Activated CD4-positive, alpha-beta memory T cell treated with anti-CD3 and anti-CD28 coated beads for 36 hours (primary cell): ENCODE measurements at regions of chr15 and their contacts with region 1.

Region 1: DNA sequence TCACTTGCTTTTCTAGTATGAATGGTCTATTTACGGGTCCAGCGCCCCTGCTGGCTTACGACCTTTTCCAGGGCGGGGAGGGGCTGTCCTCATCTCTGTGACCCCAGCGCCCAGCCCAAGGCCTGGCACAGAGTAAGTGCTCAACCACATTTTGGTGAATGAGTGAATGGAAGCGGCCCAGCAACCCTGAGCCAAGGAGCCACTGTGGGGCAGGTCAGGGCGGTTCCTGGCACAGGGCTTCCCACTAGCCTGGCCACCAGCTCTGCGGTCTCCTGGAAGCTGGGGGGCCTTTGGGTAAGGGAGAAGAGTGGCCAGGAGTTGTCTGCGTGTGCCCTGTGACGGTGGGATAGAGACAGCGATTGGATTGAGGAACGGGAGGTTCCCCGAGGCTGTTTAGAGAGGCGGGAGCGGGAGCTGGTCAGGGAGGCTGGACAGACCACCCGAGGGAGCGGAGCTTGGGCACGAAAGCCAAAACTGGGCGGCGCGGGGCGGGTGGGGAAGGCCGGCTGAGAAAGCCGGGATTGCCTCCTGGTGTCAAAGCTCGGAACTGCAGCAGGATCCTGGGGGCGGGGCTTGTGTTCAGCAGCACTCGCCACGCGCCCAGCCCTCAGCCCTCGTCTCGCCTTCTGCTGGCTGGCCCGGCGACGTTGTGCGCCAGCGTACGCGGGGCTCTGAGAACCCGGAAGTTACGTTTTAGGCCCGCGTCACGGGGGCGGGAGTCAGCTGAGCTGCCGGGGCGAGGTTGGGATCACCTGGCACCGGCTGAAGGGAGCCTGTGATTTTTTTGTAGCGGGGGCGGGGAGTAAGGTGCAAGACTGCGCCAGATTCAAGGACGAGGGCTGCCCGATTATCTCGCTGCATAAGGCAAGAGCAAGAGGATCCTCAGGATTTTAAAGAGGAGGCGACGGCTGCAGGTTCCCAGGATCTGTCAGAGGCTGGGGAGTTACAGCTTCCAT is at the start of gene VPS18:
- DNase-seq: peak; percentile 99
- H3K4me3 Mint-ChIP-seq: peak within 1 kb of the TSS; percentile 99
- H3K27ac Mint-ChIP-seq: peak within 1 kb of the TSS; percentile 86
- H3K4me1 Mint-ChIP-seq: peaks cover 27% of the 10 kb centered on the region
- H3K27me3 Mint-ChIP-seq: no peaks in the 10 kb centered on the region
- total RNA-seq, gene VPS18: 7.8 to 8.8 TPM

Region 2: GRCh38 chr15:40593588-40594428 is 300.2 kb before region 1 on chr15 and contains the start of gene KNL1:
- CTCF ChIA-PET with region 1: interaction called, 7 read pairs
- POLR2A ChIA-PET with region 1: no interaction called
- intact Hi-C with region 1: loop called (anchors 5 kb)
- DNase-seq: peak; percentile 95
- H3K4me3 Mint-ChIP-seq: peak within 1 kb of the TSS; percentile 98
- H3K27ac Mint-ChIP-seq: peak within 1 kb of the TSS; percentile 99
- H3K4me1 Mint-ChIP-seq: peaks cover 26% of the 10 kb centered on the region
- H3K27me3 Mint-ChIP-seq: peaks cover 10% of the 10 kb centered on the region
- total RNA-seq, gene KNL1: 32.8 to 33.1 TPM

Region 3: DNA sequence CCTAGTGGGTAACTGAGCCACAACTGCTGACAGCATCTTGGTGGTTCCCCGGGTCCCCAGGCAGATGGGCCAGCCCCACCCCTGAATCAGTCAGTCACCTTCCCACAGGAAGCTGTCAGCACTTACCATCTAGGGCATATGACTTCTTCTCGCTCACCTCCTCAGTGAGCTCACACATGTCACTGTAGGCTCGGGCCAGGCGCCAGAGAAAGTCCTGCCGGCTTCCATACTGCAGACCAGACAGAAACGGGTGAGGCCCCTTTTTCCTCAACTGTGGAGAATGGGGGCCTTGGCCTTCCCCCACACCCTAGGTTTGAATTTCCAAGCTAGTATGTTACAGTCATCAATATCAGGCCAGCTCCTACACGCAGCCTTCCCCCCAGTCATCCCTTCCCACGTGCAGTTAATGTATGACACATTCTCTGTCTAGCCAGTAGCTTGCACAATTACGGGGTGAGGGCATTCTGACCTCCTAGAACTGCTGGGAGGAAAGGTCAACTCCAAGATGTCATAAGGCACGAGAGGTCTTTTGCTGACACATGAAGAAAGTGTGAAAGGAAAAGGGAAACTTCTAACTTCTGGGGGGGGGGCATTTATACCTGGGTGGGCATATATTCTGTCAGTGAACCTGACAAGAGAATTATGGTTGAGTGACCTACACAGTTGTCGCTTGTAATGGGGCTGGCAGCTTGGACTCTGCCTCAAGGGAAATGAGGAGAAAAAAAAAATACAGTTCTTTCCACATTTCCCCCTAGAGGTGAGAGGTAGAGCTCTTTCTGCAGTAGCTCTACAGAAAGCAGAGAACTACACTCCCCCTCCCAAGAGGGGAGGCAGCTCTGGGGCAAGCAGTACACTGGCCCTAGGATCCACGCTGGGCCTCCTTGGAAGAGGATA is 149.8 kb before region 1 on chr15:
- CTCF ChIA-PET with region 1: interaction called, 11 read pairs
- POLR2A ChIA-PET with region 1: no interaction called
- intact Hi-C with region 1: loop called (anchors 5 kb)
- DNase-seq: peak; percentile 86
- H3K4me3 Mint-ChIP-seq: peak overlapping the region; percentile 49
- H3K27ac Mint-ChIP-seq: peak overlapping the region; percentile 89
- H3K4me1 Mint-ChIP-seq: peaks cover 29% of the 10 kb centered on the region
- H3K27me3 Mint-ChIP-seq: no peaks in the 10 kb centered on the region

Region 4: GRCh38 chr15:40857601-40858341 is 36.2 kb before region 1 on chr15:
- CTCF ChIA-PET with region 1: interaction called, 267 read pairs
- POLR2A ChIA-PET with region 1: interaction called, 20 read pairs
- intact Hi-C with region 1: loop called (anchors 1 kb)
- DNase-seq: peak; percentile 88
- H3K4me3 Mint-ChIP-seq: no peak overlapping the region
- H3K27ac Mint-ChIP-seq: no peak overlapping the region
- H3K4me1 Mint-ChIP-seq: peaks cover 5% of the 10 kb centered on the region
- H3K27me3 Mint-ChIP-seq: no peaks in the 10 kb centered on the region

Region 5: GRCh38 chr15:40879604-40880003 is 14.4 kb before region 1 on chr15:
- CTCF ChIA-PET with region 1: interaction called, 16 read pairs
- POLR2A ChIA-PET with region 1: interaction called, 6 read pairs
- intact Hi-C with region 1: no loop called
- DNase-seq: no peak
- H3K4me3 Mint-ChIP-seq: no peak overlapping the region
- H3K27ac Mint-ChIP-seq: no peak overlapping the region
- H3K4me1 Mint-ChIP-seq: peaks cover 13% of the 10 kb centered on the region
- H3K27me3 Mint-ChIP-seq: peaks cover under 1% of the 10 kb centered on the region

Region 6: GRCh38 chr15:40992241-40992741 is 98.3 kb after region 1 on chr15:
- CTCF ChIA-PET with region 1: no interaction called
- POLR2A ChIA-PET with region 1: no interaction called
- intact Hi-C with region 1: no loop called
- DNase-seq: no peak
- H3K4me3 Mint-ChIP-seq: no peak overlapping the region
- H3K27ac Mint-ChIP-seq: no peak overlapping the region
- H3K4me1 Mint-ChIP-seq: peaks cover 19% of the 10 kb centered on the region
- H3K27me3 Mint-ChIP-seq: no peaks in the 10 kb centered on the region